AG04449 (cell line): ENCODE measurements at regions of chrX and their contacts with region 1.

Region 1: DNA sequence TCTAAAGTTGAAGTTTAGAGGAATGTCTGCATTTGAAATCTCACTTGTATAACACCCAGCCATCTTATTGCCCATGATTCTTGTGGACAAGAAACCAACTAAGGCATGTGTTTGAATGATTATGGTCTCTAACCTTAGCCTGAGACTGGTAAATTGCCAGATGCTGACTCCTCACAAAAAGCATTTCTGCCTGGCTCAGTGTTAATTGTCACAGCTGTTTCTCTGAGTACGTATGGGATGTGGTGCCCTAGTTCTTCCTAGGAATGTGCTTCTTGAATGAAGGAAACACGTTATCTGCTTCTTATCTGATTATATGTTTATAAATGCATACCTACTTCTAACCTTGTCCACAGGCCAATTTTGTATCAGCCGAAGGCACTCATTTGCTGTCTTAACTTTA is 63.1 kb upstream of the NDP start:
- DNase-seq: peak; percentile 29
- H3K4me3 ChIP-seq: no peak overlapping the region
- CTCF ChIP-seq: no peak

Region 2: DNA sequence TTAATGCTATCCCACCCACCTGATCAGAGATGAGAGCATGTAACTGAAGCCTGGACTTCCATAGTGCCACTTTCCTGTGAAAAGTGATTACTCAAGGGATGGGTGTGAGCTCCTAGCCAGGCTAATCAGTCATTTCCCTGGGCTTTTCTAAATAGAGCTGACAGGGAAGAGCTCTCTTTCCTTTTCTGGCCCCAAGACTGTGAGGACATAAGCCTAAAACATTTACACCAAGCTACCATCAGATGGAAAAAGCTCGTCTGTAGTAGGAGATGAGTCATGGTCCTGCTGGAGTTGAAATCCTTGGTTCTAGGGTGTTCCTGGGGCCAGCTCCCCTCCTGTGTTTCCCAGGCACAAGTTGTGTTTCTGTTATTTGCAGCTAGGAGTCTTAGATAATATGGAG is 10.8 kb before region 1 on chrX:
- CTCF ChIA-PET with region 1: interaction called, 21 read pairs
- POLR2A ChIA-PET with region 1: no interaction called
- DNase-seq: no peak
- H3K4me3 ChIP-seq: no peak overlapping the region
- CTCF ChIP-seq: no peak